Gastrocnemius medialis (tissue), 4 donors: ENCODE measurements at regions of chr17 and their contacts with region 1.

Region 1: GRCh38 chr17:21511363-21512198 is 135.4 kb downstream of the KCNJ12 start:
- DNase-seq: peak; percentile 71 to 84
- ATAC-seq: peak; percentile 95 to 97
- H3K4me3 ChIP-seq: peak overlapping the region; percentile 65 to 82 (median 68)
- H3K27ac ChIP-seq: peak overlapping the region; percentile 68 to 80 (median 74)
- H3K4me1 ChIP-seq: peaks cover 4 to 16% of the 10 kb centered on the region in 2 donors
- H3K27me3 ChIP-seq: no peaks in the 10 kb centered on the region
- CTCF ChIP-seq: peak; percentile 61 to 90 (median 78)
- POLR2A ChIP-seq: no peak

Region 2: GRCh38 chr17:21275579-21276263 is 235.9 kb before region 1 on chr17:
- in situ Hi-C with region 1: no loop called
- intact Hi-C with region 1: loop called (anchors 2 kb)
- DNase-seq: peak; percentile 88 to 93
- ATAC-seq: peak; percentile 74 to 76
- H3K4me3 ChIP-seq: peak overlapping the region; percentile 59 to 80 (median 64)
- H3K27ac ChIP-seq: peak overlapping the region; percentile 75 to 94 (median 82)
- H3K4me1 ChIP-seq: peaks cover 31 to 33% of the 10 kb centered on the region in 2 donors
- H3K27me3 ChIP-seq: no peaks in the 10 kb centered on the region
- CTCF ChIP-seq: no peak
- POLR2A ChIP-seq: peak; percentile 71 to 80

Region 3: GRCh38 chr17:21318439-21318838 is 193.1 kb before region 1 on chr17:
- in situ Hi-C with region 1: loop called in 3 of 4 experiments (anchors 10 to 25 kb)
- intact Hi-C with region 1: loop called (anchors 2 kb)
- DNase-seq: no peak
- ATAC-seq: no peak
- H3K4me3 ChIP-seq: no peak overlapping the region
- H3K27ac ChIP-seq: no peak overlapping the region
- H3K4me1 ChIP-seq: peaks cover 0 to 5% of the 10 kb centered on the region in 2 donors
- H3K27me3 ChIP-seq: no peaks in the 10 kb centered on the region
- CTCF ChIP-seq: no peak
- POLR2A ChIP-seq: no peak

Region 4: DNA sequence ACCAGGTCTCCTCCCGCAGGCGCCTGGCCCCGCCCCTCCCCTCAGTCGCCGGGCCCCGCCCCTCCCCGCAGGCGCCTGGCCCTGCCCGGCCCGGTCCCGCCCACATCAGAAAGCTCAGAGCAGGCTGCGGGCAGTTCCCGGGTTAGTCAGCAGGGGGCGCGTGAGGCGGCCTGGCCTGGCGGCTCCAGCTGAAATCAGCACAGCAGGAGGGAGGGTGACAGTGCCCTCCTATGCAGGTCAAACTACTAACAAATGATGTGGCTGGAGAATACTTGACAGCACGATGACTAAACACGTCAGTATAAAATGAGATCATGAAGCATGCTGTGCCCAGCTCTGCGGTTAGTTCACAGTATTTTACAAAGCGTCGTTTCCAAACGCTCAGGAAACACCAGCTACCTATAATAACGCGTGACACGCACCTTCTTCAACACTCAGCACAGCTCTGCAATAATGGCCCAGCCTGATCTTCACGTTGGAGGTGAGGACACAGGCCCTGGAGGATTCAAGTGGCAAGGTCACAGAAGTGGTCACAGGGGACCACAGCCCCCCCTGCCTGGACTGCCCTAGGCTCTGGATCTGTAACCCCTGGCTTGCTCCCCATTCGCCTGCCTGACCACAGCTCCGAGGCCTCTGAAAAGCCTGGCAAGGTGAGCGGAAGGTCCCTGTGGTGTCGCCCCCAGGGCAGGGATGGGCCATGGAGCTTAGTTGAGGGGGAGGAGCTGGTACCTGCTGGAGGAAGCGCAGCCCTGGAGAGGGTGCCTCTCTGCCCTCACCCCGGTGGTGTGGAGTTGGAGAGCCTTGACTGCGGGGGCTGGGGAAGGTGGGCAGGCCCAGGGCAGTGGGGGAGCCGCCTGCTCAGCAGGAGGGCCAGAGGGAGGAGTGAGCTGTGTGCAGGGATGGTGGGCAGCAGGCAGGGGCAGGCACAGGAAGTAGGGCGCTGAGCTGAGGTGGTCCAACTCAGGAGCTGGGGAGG is 54.2 kb before region 1 on chr17:
- in situ Hi-C with region 1: loop called in 2 of 4 experiments (anchors 5 kb)
- intact Hi-C with region 1: loop called (anchors 1 kb)
- DNase-seq: peak; percentile 76 to 89
- ATAC-seq: peak; percentile 89 to 92
- H3K4me3 ChIP-seq: no peak overlapping the region
- H3K27ac ChIP-seq: peak overlapping the region in 1 of 4 donors; percentile 35
- H3K4me1 ChIP-seq: peaks cover 4 to 10% of the 10 kb centered on the region in 2 donors
- H3K27me3 ChIP-seq: no peaks in the 10 kb centered on the region
- CTCF ChIP-seq: peak; percentile 78 to 99 (median 93)
- POLR2A ChIP-seq: no peak

Region 5: DNA sequence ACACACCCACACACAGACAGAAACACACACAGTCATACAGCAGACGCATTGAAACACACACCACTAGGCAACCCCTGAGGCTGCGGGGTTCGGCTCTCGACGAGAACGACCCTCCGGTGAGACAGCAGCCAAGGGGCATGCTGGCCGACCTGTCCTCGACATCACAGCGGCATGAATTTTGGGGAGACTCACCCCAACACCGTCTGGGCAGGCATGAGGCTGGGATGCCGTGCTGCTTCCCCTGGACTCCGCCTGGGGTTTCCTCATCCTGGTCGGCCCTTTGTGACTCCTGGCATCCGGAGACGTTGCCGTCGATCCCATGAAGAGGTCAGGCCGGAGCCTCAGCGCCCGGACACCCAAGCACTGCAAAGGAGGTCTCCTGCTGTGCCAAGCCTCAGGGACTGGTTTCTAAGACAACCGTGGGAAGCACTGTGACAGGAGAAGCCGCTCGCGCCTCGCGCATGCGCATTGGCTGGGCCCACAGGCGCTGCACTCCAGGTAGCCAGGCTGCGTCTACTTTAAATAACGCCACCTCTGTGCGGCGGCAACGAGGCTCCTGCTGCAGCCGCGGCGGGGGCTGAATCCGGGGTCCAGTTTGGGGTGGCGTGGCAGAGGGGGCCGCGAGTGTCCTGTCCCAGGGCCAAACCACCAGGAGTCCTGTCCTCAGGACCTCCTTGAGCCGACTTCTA is 167.0 kb after region 1 on chr17:
- in situ Hi-C with region 1: no loop called
- intact Hi-C with region 1: no loop called
- DNase-seq: no peak
- ATAC-seq: no peak
- H3K4me3 ChIP-seq: no peak overlapping the region
- H3K27ac ChIP-seq: no peak overlapping the region
- H3K4me1 ChIP-seq: no peaks in the 10 kb centered on the region
- H3K27me3 ChIP-seq: no peaks in the 10 kb centered on the region
- CTCF ChIP-seq: no peak
- POLR2A ChIP-seq: no peak